Aorta (tissue), 5 donors: ENCODE measurements at regions of chr19 and their contacts with region 1.

Region 1: DNA sequence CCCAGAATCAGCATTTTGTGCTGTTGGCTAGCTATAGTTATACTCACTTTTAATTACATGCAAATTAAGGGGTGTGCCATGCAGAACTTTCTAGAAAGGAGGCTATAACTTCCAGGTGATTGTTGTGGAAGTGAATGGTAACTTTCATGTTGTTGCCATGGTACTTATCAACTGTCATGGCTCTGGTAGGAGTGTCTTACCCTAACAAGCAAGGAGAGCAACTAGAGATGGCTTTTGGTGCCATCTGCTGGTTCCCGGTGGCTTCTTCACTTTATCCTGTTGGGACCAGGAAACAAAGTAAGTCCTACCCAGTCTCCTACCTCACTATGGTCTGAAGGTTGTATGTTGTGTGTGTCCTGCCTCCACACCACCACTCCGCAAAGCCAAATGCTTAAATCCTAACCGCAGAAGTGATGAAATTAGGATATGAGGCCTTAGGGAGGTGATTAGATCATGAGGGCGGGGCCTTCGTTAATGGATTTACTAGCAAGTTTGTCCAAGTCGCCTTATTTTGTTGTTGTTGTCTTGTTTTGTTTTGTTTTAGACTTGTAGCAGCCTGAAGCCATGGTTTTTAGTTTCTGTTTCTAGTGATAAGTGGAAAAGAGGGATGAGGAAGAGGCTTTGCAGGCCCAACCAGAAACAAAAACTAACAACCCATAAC is 22.6 kb downstream of the FBXL12 start:
- DNase-seq: peak; percentile 85 to 87
- ATAC-seq: no peak
- H3K4me3 ChIP-seq: no peak overlapping the region
- H3K27ac ChIP-seq: no peak overlapping the region
- H3K4me1 ChIP-seq: no peaks in the 10 kb centered on the region
- H3K27me3 ChIP-seq: no peaks in the 10 kb centered on the region

Region 2: DNA sequence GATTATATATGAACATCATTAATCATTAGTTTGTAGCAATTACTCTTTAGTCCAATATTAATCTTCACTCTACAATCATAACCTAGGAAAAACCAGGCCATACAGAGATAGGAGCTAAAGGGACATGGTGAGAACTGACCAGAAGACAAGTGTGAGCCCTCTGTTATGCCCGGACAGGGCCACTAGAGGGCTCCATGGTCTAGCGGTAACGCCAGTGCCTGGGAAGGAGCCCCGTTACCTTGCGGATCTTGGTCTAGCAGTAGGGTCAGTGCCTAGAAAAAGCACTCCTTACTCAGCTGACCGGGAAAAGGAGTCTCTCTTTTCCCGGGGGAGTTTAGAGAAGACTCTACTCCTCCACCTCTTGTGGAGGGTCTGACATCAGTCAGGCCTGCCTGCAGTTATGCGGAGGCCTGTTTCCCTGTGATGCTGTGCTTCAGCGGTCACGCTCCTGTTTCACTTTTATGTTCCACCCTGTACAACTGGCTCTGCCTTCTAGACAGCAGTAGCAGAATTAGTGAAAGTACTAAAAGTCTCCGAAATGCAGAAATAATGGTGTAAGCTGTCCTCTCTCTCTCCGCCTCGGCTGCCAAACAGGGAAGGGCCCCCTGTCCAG is 590.6 kb before region 1 on chr19:
- intact Hi-C with region 1: loop called (anchors 5 kb)
- DNase-seq: peak; percentile 76 to 85
- ATAC-seq: peak; percentile 63
- H3K4me3 ChIP-seq: peak overlapping the region; percentile 37 to 50
- H3K27ac ChIP-seq: no peak overlapping the region
- H3K4me1 ChIP-seq: no peaks in the 10 kb centered on the region
- H3K27me3 ChIP-seq: no peaks in the 10 kb centered on the region

Region 3: DNA sequence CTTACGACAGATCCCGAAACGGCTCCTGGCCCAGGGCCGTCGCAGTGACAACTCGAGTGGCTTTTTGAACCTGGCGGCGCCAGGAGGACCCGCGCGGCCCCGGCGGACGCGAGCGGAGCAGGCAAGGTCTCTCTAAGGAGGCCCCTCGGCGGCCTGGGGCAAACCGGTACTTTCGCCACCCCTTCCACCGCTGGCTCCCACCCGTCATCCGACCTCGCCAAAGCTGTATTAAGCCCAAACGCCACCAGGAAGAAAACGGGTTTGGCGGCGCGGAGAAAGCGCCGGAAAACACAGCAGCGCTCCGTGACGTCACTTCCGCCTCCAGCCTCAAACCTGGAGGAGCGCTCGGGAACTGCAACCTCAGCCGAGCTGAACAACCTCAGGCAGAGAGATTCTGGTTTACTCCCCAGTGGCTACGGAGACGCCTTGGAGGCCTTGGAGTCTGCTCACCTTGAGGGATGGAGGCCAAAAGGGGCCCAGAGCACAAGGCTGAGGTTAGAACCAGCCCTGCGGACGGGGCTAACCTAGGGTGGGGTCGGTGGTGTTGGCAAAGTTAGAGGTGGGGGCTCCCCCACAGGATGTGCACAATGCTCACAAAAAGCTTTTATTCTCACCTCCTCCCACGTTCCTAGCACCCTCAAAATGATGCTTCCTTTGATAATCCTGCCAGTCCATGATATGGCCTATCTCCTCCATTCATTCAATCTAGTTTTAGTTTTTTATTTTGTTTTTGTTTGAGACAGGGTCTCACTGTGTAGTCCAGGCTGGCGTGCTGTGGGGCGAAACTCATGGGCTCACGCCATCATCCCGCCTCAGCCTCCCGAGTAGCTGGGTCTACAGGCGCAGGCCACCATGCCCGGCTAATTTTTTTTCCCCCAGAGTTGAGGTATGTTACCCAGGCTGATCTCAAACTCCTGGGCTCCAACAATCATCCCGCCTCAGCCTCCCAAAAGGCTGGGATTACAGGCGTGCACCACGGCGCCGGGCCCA is 360.7 kb before region 1 on chr19 and contains the start of gene ZNF266:
- intact Hi-C with region 1: loop called in 1 of 2 experiments (anchors 10 kb)
- DNase-seq: peak; percentile 93 to 96
- ATAC-seq: peak; percentile 94
- H3K4me3 ChIP-seq: peak within 1 kb of the TSS; percentile 43 to 99
- H3K27ac ChIP-seq: peak within 1 kb of the TSS in 1 of 2 donors; percentile 49
- H3K4me1 ChIP-seq: no peaks in the 10 kb centered on the region
- H3K27me3 ChIP-seq: no peaks in the 10 kb centered on the region
- total RNA-seq, gene ZNF266: 28.2 to 35.1 TPM

Region 4: DNA sequence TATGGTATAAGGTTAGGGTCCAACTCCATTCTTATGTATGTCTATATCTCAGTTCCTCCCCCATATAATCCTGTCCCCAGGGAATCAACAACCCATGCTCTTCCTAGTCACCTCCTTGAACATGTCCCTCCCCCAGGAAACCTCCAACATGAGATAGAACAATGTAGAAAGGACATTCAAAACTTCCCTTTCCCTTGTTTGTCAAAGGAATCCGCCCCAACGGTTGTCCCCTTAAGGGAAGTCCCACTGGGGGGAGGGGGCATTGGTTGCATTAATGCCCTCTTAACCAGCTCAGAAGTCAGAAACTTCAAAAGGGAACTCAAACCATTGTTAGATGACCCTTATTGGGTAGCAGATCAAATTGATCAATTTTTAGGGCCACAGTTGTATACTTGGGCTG is 168.4 kb before region 1 on chr19:
- intact Hi-C with region 1: loop called (anchors 2 to 5 kb)
- DNase-seq: no peak
- ATAC-seq: no peak
- H3K4me3 ChIP-seq: no peak overlapping the region
- H3K27ac ChIP-seq: no peak overlapping the region
- H3K4me1 ChIP-seq: no peaks in the 10 kb centered on the region
- H3K27me3 ChIP-seq: no peaks in the 10 kb centered on the region

Region 5: DNA sequence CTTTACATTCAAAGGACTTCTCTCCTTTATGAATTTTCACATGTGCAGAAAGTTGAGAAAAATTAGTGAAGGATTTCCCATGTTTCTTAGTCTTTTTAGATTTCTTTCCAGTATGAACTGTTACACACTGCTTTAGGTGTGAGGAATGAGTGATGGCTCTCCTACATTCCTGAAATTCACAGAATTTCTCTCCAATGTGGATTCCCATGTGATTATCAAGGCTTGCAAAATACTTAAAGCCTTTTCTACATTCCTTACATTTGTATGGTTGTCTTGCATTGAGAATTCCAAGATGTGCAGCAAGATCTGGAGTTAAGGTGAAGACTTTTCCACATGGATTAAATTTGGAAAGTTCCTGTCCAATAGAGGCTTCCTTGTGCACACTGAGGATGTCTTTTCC is 105.5 kb before region 1 on chr19:
- intact Hi-C with region 1: no loop called
- DNase-seq: no peak
- ATAC-seq: no peak
- H3K4me3 ChIP-seq: no peak overlapping the region
- H3K27ac ChIP-seq: no peak overlapping the region
- H3K4me1 ChIP-seq: no peaks in the 10 kb centered on the region
- H3K27me3 ChIP-seq: no peaks in the 10 kb centered on the region

Region 6: GRCh38 chr19:9727644-9728043 is 68.6 kb before region 1 on chr19:
- intact Hi-C with region 1: no loop called
- DNase-seq: no peak
- ATAC-seq: no peak
- H3K4me3 ChIP-seq: no peak overlapping the region
- H3K27ac ChIP-seq: no peak overlapping the region
- H3K4me1 ChIP-seq: no peaks in the 10 kb centered on the region
- H3K27me3 ChIP-seq: no peaks in the 10 kb centered on the region